Naive thymus-derived CD4-positive, alpha-beta T cell (primary cell): ENCODE measurements at regions of chr3 and their contacts with region 1.

Region 1: GRCh38 chr3:120147072-120147871 is 53.0 kb upstream of the GSK3B start:
- DNase-seq: peak in 7 of 9 donors; percentile 48 to 78 (median 65)
- ATAC-seq: peak; percentile 91
- H3K4me3 ChIP-seq: no peak overlapping the region
- H3K4me3 Mint-ChIP-seq: no peak overlapping the region
- H3K27ac ChIP-seq: no peak overlapping the region
- H3K27ac Mint-ChIP-seq: peak overlapping the region in 6 of 9 donors; percentile 1 to 61 (median 38)
- H3K4me1 ChIP-seq: no peaks in the 10 kb centered on the region
- H3K4me1 Mint-ChIP-seq: peaks cover 9 to 33% (median 22%) of the 10 kb centered on the region in 7 donors
- H3K27me3 ChIP-seq: no peaks in the 10 kb centered on the region
- H3K27me3 Mint-ChIP-seq: peaks cover 0 to 3% (median 0%) of the 10 kb centered on the region in 5 donors

Region 2: GRCh38 chr3:119529883-119530282 is 617.4 kb before region 1 on chr3:
- CTCF ChIA-PET with region 1: no interaction called
- POLR2A ChIA-PET with region 1: no interaction called
- intact Hi-C with region 1: loop called in 1 of 2 experiments (anchors 10 kb)
- DNase-seq: no peak
- ATAC-seq: no peak
- H3K4me3 ChIP-seq: no peak overlapping the region
- H3K4me3 Mint-ChIP-seq: no peak overlapping the region
- H3K27ac ChIP-seq: no peak overlapping the region
- H3K27ac Mint-ChIP-seq: peak overlapping the region in 1 of 9 donors; percentile 1
- H3K4me1 ChIP-seq: no peaks in the 10 kb centered on the region
- H3K4me1 Mint-ChIP-seq: peaks cover 0 to 3% (median 0%) of the 10 kb centered on the region in 7 donors
- H3K27me3 ChIP-seq: no peaks in the 10 kb centered on the region
- H3K27me3 Mint-ChIP-seq: no peaks in the 10 kb centered on the region

Region 3: GRCh38 chr3:119618905-119619493 is 528.3 kb before region 1 on chr3:
- CTCF ChIA-PET with region 1: no interaction called
- POLR2A ChIA-PET with region 1: no interaction called
- intact Hi-C with region 1: no loop called
- DNase-seq: no peak
- ATAC-seq: no peak
- H3K4me3 ChIP-seq: no peak overlapping the region
- H3K4me3 Mint-ChIP-seq: no peak overlapping the region
- H3K27ac ChIP-seq: no peak overlapping the region
- H3K27ac Mint-ChIP-seq: no peak overlapping the region
- H3K4me1 ChIP-seq: no peaks in the 10 kb centered on the region
- H3K4me1 Mint-ChIP-seq: no peaks in the 10 kb centered on the region
- H3K27me3 ChIP-seq: no peaks in the 10 kb centered on the region
- H3K27me3 Mint-ChIP-seq: peaks cover 0 to 19% (median 5%) of the 10 kb centered on the region in 5 donors

Region 4: GRCh38 chr3:119819806-119820205 is 327.5 kb before region 1 on chr3:
- CTCF ChIA-PET with region 1: interaction called, 5 read pairs
- POLR2A ChIA-PET with region 1: no interaction called
- intact Hi-C with region 1: loop called in 1 of 2 experiments (anchors 1 kb)
- DNase-seq: no peak
- ATAC-seq: no peak
- H3K4me3 ChIP-seq: no peak overlapping the region
- H3K4me3 Mint-ChIP-seq: no peak overlapping the region
- H3K27ac ChIP-seq: no peak overlapping the region
- H3K27ac Mint-ChIP-seq: no peak overlapping the region
- H3K4me1 ChIP-seq: no peaks in the 10 kb centered on the region
- H3K4me1 Mint-ChIP-seq: peaks cover 0 to 9% (median 4%) of the 10 kb centered on the region in 7 donors
- H3K27me3 ChIP-seq: no peaks in the 10 kb centered on the region
- H3K27me3 Mint-ChIP-seq: no peaks in the 10 kb centered on the region

Region 5: DNA sequence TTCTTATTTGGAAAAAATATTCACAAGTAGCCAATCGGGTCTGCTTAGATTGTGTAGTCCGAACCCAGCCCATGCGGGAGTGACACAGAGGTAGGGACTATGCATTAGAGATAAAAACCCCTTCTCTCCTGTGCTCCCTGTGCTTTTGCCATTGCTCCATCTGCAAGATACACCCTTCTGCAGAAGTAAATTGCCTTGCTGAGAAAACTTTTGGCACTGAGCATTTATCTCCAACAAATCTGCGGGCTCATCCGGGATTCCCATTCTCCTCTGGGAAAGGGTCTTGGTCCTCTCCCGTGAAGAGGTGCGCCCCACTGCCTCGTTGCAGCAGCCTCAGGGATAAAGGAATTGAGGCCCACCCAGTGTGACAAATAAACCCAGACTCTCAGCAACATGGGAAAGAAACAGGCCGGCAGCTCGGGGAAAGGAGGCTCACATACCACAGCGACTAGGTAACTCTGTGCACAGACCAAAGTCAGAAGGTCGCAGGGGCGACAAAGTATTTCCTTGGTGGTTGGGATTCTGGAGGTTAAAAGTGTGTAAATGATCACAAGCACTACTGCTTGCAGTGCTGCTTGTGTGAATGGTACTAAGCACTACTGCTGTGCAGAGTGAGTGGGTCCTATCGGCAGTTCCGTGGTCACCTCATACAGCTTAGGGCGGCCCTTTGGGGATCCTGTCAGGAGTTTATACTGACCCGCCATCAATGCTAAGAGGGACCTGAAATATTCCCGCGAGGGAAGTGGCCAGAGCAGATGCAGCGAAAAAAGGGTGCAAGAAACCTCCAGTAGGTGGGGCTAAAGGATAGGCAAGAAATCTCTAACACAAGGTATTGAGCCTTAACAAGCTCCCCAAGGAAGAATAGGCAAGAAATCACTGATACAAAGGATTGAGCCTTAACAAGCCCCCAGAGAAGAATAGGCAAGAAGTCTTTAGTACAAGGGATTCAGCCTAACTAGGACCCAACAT is 107.3 kb before region 1 on chr3:
- CTCF ChIA-PET with region 1: interaction called, 3 read pairs
- POLR2A ChIA-PET with region 1: no interaction called
- intact Hi-C with region 1: loop called in 1 of 2 experiments (anchors 1 kb)
- DNase-seq: no peak
- ATAC-seq: no peak
- H3K4me3 ChIP-seq: no peak overlapping the region
- H3K4me3 Mint-ChIP-seq: peak overlapping the region in 2 of 10 donors; percentile 30 to 52
- H3K27ac ChIP-seq: no peak overlapping the region
- H3K27ac Mint-ChIP-seq: peak overlapping the region in 2 of 9 donors; percentile 20 to 33
- H3K4me1 ChIP-seq: no peaks in the 10 kb centered on the region
- H3K4me1 Mint-ChIP-seq: peaks cover 4 to 65% (median 22%) of the 10 kb centered on the region in 7 donors
- H3K27me3 ChIP-seq: no peaks in the 10 kb centered on the region
- H3K27me3 Mint-ChIP-seq: no peaks in the 10 kb centered on the region

Region 6: GRCh38 chr3:120198305-120198878 is 51.1 kb after region 1 on chr3:
- CTCF ChIA-PET with region 1: no interaction called
- POLR2A ChIA-PET with region 1: no interaction called
- intact Hi-C with region 1: no loop called
- DNase-seq: no peak
- ATAC-seq: no peak
- H3K4me3 ChIP-seq: no peak overlapping the region
- H3K4me3 Mint-ChIP-seq: no peak overlapping the region
- H3K27ac ChIP-seq: no peak overlapping the region
- H3K27ac Mint-ChIP-seq: no peak overlapping the region
- H3K4me1 ChIP-seq: no peaks in the 10 kb centered on the region
- H3K4me1 Mint-ChIP-seq: no peaks in the 10 kb centered on the region
- H3K27me3 ChIP-seq: no peaks in the 10 kb centered on the region
- H3K27me3 Mint-ChIP-seq: no peaks in the 10 kb centered on the region

Region 7: GRCh38 chr3:120558771-120559241 is 411.5 kb after region 1 on chr3:
- CTCF ChIA-PET with region 1: no interaction called
- POLR2A ChIA-PET with region 1: no interaction called
- intact Hi-C with region 1: loop called in 1 of 2 experiments (anchors 2 kb)
- DNase-seq: peak; percentile 80 to 89 (median 88)
- ATAC-seq: peak; percentile 97
- H3K4me3 ChIP-seq: peak overlapping the region; percentile 61
- H3K4me3 Mint-ChIP-seq: peak overlapping the region; percentile 75 to 87 (median 82)
- H3K27ac ChIP-seq: peak overlapping the region; percentile 58
- H3K27ac Mint-ChIP-seq: peak overlapping the region; percentile 54 to 91 (median 83)
- H3K4me1 ChIP-seq: peaks cover 6% of the 10 kb centered on the region in 2 donors
- H3K4me1 Mint-ChIP-seq: peaks cover 6 to 23% (median 16%) of the 10 kb centered on the region in 7 donors
- H3K27me3 ChIP-seq: peaks cover 0 to 4% of the 10 kb centered on the region in 2 donors
- H3K27me3 Mint-ChIP-seq: peaks cover 0 to 13% (median 7%) of the 10 kb centered on the region in 5 donors